Transverse colon (tissue), 4 donors: ENCODE measurements at regions of chr7 and their contacts with region 1.

Region 1: DNA sequence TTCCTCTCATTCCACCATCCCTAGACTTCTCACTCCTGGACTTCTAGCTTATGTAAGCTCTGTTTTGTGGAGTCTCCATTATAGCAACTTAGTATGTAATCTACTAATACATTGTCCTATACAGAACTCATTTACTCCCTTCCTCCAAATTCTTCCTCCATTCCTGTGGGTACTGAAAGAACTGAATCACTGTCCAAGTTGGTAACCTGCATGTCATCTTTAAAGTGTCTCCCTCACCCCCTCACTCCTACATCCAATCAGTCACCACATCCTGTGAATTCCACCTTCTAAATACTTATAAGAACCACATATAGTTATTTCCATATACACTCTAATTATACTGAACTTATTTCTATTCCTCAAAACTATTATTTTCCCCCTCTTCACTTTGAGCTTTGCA is 20.3 kb downstream of the AASS start:
- DNase-seq: no peak
- H3K4me3 ChIP-seq: no peak overlapping the region
- H3K27ac ChIP-seq: no peak overlapping the region
- H3K4me1 ChIP-seq: no peaks in the 10 kb centered on the region
- H3K27me3 ChIP-seq: no peaks in the 10 kb centered on the region
- CTCF ChIP-seq: no peak
- EP300 ChIP-seq: no peak
- POLR2A ChIP-seq: no peak

Region 2: DNA sequence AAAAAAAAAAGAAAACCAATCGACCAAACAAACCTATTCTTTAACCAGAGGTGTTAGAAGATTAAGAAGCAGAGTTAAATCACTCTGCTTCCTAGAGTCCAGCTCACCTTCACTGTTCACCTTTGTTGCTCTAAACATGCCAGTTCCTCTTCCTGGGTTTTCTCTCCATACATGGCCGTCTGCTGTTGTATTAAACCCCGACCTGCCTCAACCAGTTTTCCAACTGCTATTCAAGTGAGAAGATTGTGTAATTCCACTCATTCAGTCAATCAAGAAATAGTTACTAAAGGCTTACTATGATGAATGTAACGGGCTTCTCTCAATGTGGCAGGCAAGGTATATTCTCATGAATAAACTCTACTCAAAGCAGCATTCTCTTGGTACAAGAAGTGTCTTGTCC is 11.5 kb after region 1 on chr7:
- in situ Hi-C with region 1: no loop called
- intact Hi-C with region 1: loop called (anchors 1 kb)
- DNase-seq: no peak
- H3K4me3 ChIP-seq: no peak overlapping the region
- H3K27ac ChIP-seq: no peak overlapping the region
- H3K4me1 ChIP-seq: peaks cover 0 to 22% (median 4%) of the 10 kb centered on the region in 4 donors
- H3K27me3 ChIP-seq: no peaks in the 10 kb centered on the region
- CTCF ChIP-seq: no peak
- EP300 ChIP-seq: no peak
- POLR2A ChIP-seq: no peak